AG04449 (cell line): ENCODE measurements at regions of chr9 and their contacts with region 1.

Region 1: DNA sequence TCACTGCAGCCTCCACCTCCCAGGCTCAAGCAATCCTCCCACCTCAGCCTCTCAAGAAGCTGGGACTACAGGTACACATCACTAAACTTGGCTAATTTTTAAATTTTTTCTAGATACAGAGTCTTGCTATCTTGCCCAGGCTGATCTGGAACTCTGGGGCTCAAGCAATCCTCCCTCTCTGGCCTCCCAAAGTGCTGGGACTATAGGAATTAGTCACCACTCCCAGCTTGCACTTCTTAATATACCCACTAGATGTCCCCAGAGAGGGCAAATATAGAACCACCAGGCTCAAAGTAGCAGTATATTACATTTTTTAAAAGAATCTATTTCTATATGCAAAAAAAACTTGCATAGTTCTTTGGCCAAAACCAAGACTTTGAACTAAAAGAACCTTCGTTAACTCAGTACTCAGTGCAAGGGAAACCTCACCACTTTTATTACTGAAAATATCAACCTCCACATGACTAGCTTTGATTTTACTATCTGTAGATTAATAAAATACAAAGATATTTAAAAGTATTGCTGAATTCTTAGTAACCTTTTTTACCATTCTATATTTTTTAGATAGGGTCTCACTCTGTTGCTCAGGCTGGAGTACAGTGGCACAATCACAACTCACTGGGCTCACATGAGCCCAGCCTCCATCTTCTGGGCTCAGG is 25.8 kb upstream of the HSD17B3 start:
- DNase-seq: peak; percentile 3
- H3K4me3 ChIP-seq: no peak overlapping the region
- CTCF ChIP-seq: peak; percentile 51

Region 2: GRCh38 chr9:96305171-96305570 is 22.7 kb before region 1 on chr9:
- CTCF ChIA-PET with region 1: interaction called, 10 read pairs
- POLR2A ChIA-PET with region 1: no interaction called
- DNase-seq: no peak
- H3K4me3 ChIP-seq: no peak overlapping the region
- CTCF ChIP-seq: no peak

Region 3: DNA sequence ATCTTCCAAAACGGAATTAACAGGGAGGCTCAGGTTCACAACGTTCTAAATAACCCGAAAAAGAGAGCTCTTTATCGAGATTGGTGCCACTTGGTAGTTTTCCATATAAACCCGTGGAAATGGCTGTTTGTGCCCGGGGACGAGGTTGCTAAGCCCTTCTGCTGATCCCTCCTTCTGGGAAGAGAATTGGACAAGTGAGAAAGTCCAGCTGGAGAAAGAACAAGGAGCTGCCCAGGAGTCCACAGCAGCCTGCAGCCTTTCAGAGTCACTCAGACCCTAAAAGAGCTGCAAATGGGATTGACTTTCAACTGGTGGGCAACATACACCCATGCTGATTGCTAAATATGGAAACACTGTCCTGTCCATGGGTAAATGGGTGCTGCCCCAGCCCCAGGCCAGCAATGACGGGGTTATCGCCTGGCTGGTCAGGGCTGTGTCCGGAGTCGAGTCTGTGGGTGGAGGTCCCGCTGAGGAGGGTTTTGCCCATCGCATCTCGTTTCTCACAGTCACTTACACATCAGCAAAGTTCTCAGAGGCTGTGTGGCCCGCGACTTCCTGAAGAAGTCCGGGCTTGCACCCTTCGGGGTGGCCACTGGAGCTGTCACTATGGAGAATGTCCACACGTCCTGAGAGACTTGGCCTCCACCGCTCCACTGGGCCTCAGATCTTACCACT is 14.9 kb after region 1 on chr9:
- CTCF ChIA-PET with region 1: interaction called, 21 read pairs
- POLR2A ChIA-PET with region 1: no interaction called
- DNase-seq: no peak
- H3K4me3 ChIP-seq: no peak overlapping the region
- CTCF ChIP-seq: no peak

Region 4: GRCh38 chr9:96495341-96495740 is 167.5 kb after region 1 on chr9:
- CTCF ChIA-PET with region 1: no interaction called
- POLR2A ChIA-PET with region 1: no interaction called
- DNase-seq: peak; percentile 59
- H3K4me3 ChIP-seq: no peak overlapping the region
- CTCF ChIP-seq: no peak

Region 5: GRCh38 chr9:96654443-96655197 is 326.8 kb after region 1 on chr9:
- CTCF ChIA-PET with region 1: interaction called, 43 read pairs
- POLR2A ChIA-PET with region 1: no interaction called
- DNase-seq: no peak
- H3K4me3 ChIP-seq: peak overlapping the region; percentile 68
- CTCF ChIP-seq: peak; percentile 8

Region 6: GRCh38 chr9:96663506-96664120 is 335.8 kb after region 1 on chr9:
- CTCF ChIA-PET with region 1: interaction called, 190 read pairs
- POLR2A ChIA-PET with region 1: no interaction called
- DNase-seq: no peak
- H3K4me3 ChIP-seq: no peak overlapping the region
- CTCF ChIP-seq: no peak